ENCODE measurements at regions of chr3 and their contacts with region 1.

Region 1: GRCh38 chr3:90184861-90185260 is 1077.4 kb downstream of the EPHA3 start:
- DNase-seq: no peak
- ATAC-seq: no peak
- H3K4me3 ChIP-seq: no peak overlapping the region
- H3K27ac ChIP-seq: no peak overlapping the region
- H3K4me1 ChIP-seq: no peaks in the 10 kb centered on the region
- H3K27me3 ChIP-seq: no peaks in the 10 kb centered on the region

Region 2: DNA sequence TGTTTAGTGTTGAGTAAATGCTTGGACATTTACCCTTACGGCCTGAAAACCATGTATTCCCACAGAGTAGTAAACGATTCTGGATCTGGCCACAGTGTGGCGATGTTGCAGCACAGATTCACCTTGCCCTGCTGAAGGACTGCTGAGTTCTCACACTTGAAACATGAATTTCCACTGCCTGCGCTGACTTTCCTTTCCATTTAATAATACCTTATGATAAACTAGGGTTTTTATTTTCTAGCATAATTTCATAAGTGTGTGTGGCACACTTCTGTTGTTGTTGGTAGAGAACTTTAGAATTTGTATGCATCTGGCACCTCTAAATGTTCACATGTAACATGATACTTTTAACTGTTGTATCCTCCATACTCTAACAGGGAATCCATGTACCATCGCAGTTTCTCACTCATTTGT is 1981.2 kb before region 1 on chr3:
- intact Hi-C with region 1: loop called in 1 of 4 experiments (anchors 5 kb)
- DNase-seq: peak; percentile 63 to 82 (median 78)
- ATAC-seq: peak; percentile 85 to 86
- H3K4me3 ChIP-seq: no peak overlapping the region
- H3K27ac ChIP-seq: no peak overlapping the region
- H3K4me1 ChIP-seq: no peaks in the 10 kb centered on the region
- H3K27me3 ChIP-seq: no peaks in the 10 kb centered on the region

Region 3: DNA sequence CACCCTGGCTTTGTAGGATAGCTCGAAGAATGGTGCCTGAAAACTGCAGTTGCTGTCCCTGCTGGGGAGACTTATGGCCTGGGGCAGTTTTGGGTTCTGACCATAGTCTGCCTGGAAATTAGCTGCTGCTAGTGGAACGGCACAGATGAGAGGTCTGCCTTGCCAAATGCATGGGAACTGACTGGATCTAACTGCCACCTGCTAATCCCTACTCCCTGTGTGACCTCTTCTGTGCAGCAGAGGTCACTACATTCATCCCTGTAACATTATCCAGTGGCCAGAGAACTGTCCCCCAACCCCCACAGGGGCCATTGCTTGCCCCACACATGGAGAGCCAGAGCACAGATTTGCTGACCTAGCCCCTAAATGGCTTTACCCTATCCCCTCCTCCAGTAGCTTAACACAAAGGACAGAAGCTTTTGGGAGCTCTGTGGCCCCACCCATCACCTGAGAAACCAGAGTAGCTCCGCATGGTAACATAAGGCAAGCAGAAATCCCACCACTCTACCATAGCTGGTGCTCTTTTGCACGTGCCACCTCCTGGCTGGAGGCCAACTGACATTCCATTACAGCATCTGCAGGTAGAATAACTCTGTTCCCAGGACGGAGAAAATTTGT is 237.4 kb before region 1 on chr3:
- intact Hi-C with region 1: no loop called
- DNase-seq: no peak
- ATAC-seq: no peak
- H3K4me3 ChIP-seq: no peak overlapping the region
- H3K27ac ChIP-seq: no peak overlapping the region
- H3K4me1 ChIP-seq: no peaks in the 10 kb centered on the region
- H3K27me3 ChIP-seq: no peaks in the 10 kb centered on the region